Gastrocnemius medialis (tissue), 4 donors: ENCODE measurements at regions of chr4 and their contacts with region 1.

Region 1: GRCh38 chr4:26404743-26405206 is 84.0 kb downstream of the RBPJ start:
- DNase-seq: no peak
- ATAC-seq: no peak
- H3K4me3 ChIP-seq: no peak overlapping the region
- H3K27ac ChIP-seq: no peak overlapping the region
- H3K4me1 ChIP-seq: peaks cover 9 to 12% of the 10 kb centered on the region in 2 donors
- H3K27me3 ChIP-seq: no peaks in the 10 kb centered on the region
- CTCF ChIP-seq: no peak
- POLR2A ChIP-seq: no peak

Region 2: GRCh38 chr4:25981749-25982148 is 423.0 kb before region 1 on chr4:
- in situ Hi-C with region 1: loop called in 3 of 4 experiments (anchors 10 to 25 kb)
- intact Hi-C with region 1: no loop called
- DNase-seq: no peak
- ATAC-seq: no peak
- H3K4me3 ChIP-seq: no peak overlapping the region
- H3K27ac ChIP-seq: no peak overlapping the region
- H3K4me1 ChIP-seq: no peaks in the 10 kb centered on the region
- H3K27me3 ChIP-seq: no peaks in the 10 kb centered on the region
- CTCF ChIP-seq: no peak
- POLR2A ChIP-seq: no peak

Region 3: DNA sequence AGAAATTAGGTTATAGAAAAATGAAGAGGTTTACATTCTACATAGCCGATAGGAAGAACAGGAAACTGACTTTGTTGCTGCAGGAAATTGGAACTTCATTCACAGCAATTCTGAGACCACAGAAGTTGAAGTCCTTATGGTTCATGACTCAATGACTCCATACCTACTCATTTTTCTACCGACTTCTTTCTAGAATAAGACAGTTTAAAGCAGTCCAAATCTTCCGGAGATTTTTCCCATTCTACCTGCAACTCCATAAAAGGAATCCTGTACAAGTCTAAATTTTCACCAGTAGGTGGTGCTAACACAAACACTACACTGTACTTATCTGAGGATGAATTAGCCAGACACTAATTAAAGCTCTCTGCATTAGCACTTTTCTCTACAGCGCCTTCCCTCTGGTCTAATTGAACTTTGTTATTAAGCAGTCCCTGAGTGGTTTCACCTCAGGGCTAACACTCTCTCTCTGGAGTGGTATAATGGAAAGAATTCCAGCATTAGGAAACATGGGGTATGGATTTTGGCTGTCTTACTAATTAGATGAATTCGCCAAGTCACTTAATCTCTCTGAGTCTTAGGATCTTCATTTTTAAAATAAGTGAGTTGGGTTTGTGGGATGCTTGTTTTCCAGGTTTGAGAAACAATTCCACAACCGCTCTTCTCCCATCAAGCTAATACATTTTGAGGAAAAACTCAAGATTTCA is 322.8 kb before region 1 on chr4:
- in situ Hi-C with region 1: loop called in 3 of 4 experiments (anchors 10 kb)
- intact Hi-C with region 1: loop called (anchors 2 kb)
- DNase-seq: no peak
- ATAC-seq: peak in 1 of 2 donors; percentile 35
- H3K4me3 ChIP-seq: no peak overlapping the region
- H3K27ac ChIP-seq: no peak overlapping the region
- H3K4me1 ChIP-seq: peaks cover 29 to 35% of the 10 kb centered on the region in 2 donors
- H3K27me3 ChIP-seq: no peaks in the 10 kb centered on the region
- CTCF ChIP-seq: peak; percentile 22 to 67 (median 63)
- POLR2A ChIP-seq: no peak

Region 4: DNA sequence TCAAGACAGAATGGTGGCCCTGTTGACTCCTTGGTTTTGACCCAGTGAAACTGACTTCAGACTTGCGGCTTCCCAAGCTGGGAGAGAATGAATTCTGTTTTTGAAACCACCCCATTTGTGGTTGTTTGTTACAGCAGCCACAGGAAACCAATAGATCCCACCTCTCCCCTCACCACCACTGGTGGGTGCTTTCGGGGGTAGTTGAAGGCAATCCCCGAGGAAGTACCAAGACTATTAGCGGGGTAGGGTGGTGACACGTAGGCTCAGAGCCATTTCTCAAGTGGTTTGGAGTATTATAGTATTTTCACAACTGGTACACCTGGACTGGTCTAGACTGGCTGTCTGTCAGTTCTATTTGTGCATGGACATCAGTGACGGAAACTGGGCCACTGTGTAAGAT is 273.1 kb before region 1 on chr4:
- in situ Hi-C with region 1: no loop called
- intact Hi-C with region 1: no loop called
- DNase-seq: no peak
- ATAC-seq: no peak
- H3K4me3 ChIP-seq: no peak overlapping the region
- H3K27ac ChIP-seq: no peak overlapping the region
- H3K4me1 ChIP-seq: no peaks in the 10 kb centered on the region
- H3K27me3 ChIP-seq: no peaks in the 10 kb centered on the region
- CTCF ChIP-seq: no peak
- POLR2A ChIP-seq: no peak

Region 5: DNA sequence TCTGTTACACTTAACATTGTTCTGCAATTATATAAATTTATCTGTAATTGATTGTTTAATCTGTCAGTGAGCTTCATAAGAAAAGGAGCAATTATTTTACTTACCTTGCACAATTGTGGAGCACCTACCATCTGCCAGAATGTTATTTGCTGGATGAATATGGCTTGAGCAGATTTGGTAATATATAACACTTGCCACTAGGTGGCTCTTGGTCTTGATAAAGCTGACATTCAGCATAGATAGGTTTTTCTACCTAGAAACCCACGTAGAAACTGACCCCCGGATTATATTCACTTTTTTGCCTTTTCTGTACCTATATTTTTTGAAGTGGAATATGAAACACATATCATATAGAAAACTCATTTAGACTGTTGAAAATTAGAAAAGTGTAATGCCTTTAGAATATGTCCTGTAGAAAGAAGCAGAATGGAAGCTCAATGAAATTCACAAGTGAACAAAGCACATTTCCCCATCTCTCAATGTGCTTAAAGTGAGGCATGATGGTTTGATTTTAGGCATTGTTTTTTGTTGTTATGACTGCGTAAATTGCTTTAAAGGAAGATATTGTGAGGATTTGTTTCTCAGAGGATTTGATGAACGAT is 74.5 kb before region 1 on chr4:
- in situ Hi-C with region 1: loop called in 3 of 4 experiments (anchors 5 to 10 kb)
- intact Hi-C with region 1: no loop called
- DNase-seq: no peak
- ATAC-seq: peak; percentile 67 to 77
- H3K4me3 ChIP-seq: no peak overlapping the region
- H3K27ac ChIP-seq: no peak overlapping the region
- H3K4me1 ChIP-seq: peaks cover 29 to 55% of the 10 kb centered on the region in 2 donors
- H3K27me3 ChIP-seq: no peaks in the 10 kb centered on the region
- CTCF ChIP-seq: peak; percentile 62 to 75 (median 67)
- POLR2A ChIP-seq: no peak